Colonic mucosa (tissue), 4 donors: ENCODE measurements at regions of chr11 and their contacts with region 1.

Region 1: DNA sequence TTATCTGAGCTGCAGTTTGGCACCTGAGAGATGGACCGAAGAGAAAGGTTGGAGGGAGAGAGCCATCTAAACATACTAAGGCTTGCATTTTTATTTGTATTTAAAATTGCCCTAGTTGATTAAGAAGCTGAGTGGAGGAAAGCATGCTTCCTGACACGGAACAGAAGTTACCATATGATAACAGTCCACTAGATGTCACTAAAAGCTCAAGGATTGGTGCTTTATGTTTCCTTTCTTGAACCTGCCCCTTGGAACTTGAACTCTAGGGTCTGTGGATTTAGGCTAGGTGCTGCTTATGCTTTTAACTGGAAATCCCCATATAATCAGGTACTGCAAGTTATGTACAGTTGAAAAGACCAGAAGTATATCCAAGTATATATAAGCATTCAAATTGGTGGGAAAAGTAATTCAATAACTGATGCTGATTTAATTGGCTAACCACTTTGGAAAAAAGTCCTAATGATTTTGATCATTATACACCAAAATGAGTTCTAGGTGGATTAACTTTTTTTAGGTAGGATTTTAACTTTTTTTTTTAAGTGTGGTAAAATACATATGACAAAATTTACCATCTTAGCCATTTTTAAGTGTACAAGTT is 9.5 kb downstream of the RBMXL2 start:
- DNase-seq: no peak
- H3K4me3 ChIP-seq: no peak overlapping the region
- H3K27ac ChIP-seq: no peak overlapping the region
- H3K4me1 ChIP-seq: no peaks in the 10 kb centered on the region
- H3K27me3 ChIP-seq: no peaks in the 10 kb centered on the region
- CTCF ChIP-seq: peak; percentile 52

Region 2: DNA sequence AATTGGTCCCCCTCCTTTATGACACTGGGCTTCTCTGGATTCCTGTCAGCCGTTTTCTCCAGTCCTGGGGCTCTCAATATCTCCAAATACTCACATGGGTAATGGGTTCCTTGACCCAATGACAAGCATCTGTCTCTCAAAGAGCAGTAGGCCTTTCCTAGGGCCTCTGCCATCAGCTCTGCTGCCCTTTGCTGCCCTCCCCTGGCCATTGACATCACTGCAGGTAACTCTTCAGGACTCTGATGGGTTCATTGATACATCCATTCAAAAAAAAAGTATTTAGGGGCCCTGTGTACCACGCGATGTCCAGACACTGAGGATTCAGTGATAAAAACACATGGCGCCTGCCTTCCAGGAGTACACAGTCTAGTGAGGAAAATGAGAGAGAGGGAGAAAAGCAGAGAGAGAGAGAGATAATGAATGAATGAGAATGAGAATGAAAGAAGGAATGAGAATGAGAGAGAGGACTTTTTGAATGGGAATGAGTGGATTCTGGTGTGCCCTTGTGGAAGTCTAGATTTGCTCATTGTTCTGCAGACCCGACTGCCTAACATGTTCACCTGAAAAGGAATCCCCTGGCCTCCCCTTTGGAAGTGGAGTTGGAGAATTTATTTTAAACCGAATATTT is 344.4 kb after region 1 on chr11:
- intact Hi-C with region 1: loop called (anchors 5 kb)
- DNase-seq: peak; percentile 71
- H3K4me3 ChIP-seq: no peak overlapping the region
- H3K27ac ChIP-seq: no peak overlapping the region
- H3K4me1 ChIP-seq: no peaks in the 10 kb centered on the region
- H3K27me3 ChIP-seq: no peaks in the 10 kb centered on the region
- CTCF ChIP-seq: peak; percentile 68

Region 3: DNA sequence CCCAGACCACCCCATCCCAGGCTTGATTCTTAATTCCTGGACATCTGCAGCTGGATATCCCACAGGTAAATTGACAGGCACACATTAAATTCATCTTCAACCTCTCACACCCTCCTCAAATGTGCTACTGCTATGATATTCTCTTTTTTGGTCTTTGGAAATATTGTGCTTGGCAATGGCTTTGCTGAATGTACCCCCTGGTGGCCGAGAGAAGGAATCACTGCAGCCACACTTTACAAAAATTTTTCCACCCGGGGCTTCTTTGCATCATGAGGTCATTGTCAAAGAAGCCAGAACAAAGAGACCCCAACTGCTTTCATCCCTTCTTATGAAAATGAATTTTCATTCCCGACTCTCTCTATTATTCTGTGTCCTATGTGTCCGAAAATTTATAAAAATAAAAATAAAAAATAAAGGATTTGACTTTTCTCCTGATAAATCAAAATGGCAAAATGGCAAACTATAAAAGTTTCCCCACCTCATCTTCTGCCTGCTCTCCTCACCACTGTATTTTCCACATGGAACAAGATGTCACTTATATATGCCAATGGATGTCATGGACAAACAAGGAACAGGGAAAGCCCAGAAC is 590.0 kb after region 1 on chr11:
- intact Hi-C with region 1: loop called (anchors 5 kb)
- DNase-seq: no peak
- H3K4me3 ChIP-seq: no peak overlapping the region
- H3K27ac ChIP-seq: no peak overlapping the region
- H3K4me1 ChIP-seq: no peaks in the 10 kb centered on the region
- H3K27me3 ChIP-seq: no peaks in the 10 kb centered on the region
- CTCF ChIP-seq: peak; percentile 75

Region 4: DNA sequence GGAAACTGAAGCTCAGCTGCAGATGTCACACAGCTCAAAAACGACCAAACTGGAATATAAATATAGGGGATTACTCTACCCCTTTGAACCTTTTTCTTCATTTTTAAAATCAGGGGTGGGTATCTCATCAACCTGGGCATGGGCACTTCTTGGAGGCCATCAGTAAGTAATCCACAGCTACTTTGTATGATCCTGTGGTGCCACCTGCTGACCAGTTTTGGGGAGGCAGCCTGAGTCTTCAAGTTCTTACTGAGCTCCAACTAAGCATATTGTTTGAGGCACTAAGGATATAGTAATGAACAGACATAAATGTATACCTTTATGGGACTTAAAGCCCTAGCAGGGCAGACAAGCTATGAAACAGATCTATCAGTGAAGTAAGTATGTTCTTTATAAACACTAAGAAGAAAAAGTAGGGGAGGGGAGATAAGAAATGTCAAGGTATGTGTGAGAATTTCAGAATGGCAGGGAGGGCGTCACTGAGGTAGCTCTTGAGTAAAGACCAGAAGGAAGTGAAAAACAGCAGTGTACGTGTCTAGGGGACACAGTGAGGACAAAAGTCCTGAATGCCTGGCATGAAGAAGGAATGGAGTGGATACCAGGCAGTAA is 1001.1 kb after region 1 on chr11:
- intact Hi-C with region 1: loop called (anchors 10 kb)
- DNase-seq: peak; percentile 84
- H3K4me3 ChIP-seq: no peak overlapping the region
- H3K27ac ChIP-seq: no peak overlapping the region
- H3K4me1 ChIP-seq: no peaks in the 10 kb centered on the region
- H3K27me3 ChIP-seq: no peaks in the 10 kb centered on the region
- CTCF ChIP-seq: peak; percentile 67